Psoas muscle (tissue), 8 donors: ENCODE measurements at regions of chr16 and their contacts with region 1.

Region 1: GRCh38 chr16:57084257-57084770 is 8.1 kb upstream of the CPNE2 start:
- DNase-seq: peak; percentile 65 to 75
- ATAC-seq: peak; percentile 83 to 93 (median 88)
- H3K4me3 ChIP-seq: no peak overlapping the region
- H3K27ac ChIP-seq: no peak overlapping the region
- H3K4me1 ChIP-seq: no peaks in the 10 kb centered on the region
- H3K27me3 ChIP-seq: no peaks in the 10 kb centered on the region
- CTCF ChIP-seq: peak; percentile 97

Region 2: GRCh38 chr16:57167953-57168352 is 83.6 kb after region 1 on chr16:
- intact Hi-C with region 1: loop called (anchors 1 to 5 kb)
- DNase-seq: no peak
- ATAC-seq: peak in 1 of 4 donors; percentile 64
- H3K4me3 ChIP-seq: no peak overlapping the region
- H3K27ac ChIP-seq: no peak overlapping the region
- H3K4me1 ChIP-seq: no peaks in the 10 kb centered on the region
- H3K27me3 ChIP-seq: no peaks in the 10 kb centered on the region
- CTCF ChIP-seq: peak; percentile 51

Region 3: GRCh38 chr16:57300387-57301125 is 216.2 kb after region 1 on chr16:
- intact Hi-C with region 1: loop called in 1 of 2 experiments (anchors 10 kb)
- DNase-seq: peak; percentile 98 to 99
- ATAC-seq: peak; percentile 94 to 95 (median 94)
- H3K4me3 ChIP-seq: peak overlapping the region; percentile 62
- H3K27ac ChIP-seq: peak overlapping the region; percentile 84
- H3K4me1 ChIP-seq: peaks cover 15% of the 10 kb centered on the region
- H3K27me3 ChIP-seq: no peaks in the 10 kb centered on the region
- CTCF ChIP-seq: peak; percentile 96

Region 4: GRCh38 chr16:57413301-57413730 is 329.0 kb after region 1 on chr16:
- intact Hi-C with region 1: loop called in 1 of 2 experiments (anchors 10 kb)
- DNase-seq: no peak
- ATAC-seq: no peak
- H3K4me3 ChIP-seq: no peak overlapping the region
- H3K27ac ChIP-seq: no peak overlapping the region
- H3K4me1 ChIP-seq: peaks cover 4% of the 10 kb centered on the region
- H3K27me3 ChIP-seq: peaks cover 0 to 5% (median 0%) of the 10 kb centered on the region in 3 donors
- CTCF ChIP-seq: no peak